Activated CD8-positive, alpha-beta T cell treated with anti-CD3 and anti-CD28 coated beads for 36 hours (primary cell): ENCODE measurements at regions of chr16 and their contacts with region 1.

Region 1: GRCh38 chr16:26645614-26646013 is 421.1 kb upstream of the C16orf82 start:
- DNase-seq: peak; percentile 73
- ATAC-seq: peak; percentile 81
- H3K4me3 Mint-ChIP-seq: no peak overlapping the region
- H3K27ac Mint-ChIP-seq: no peak overlapping the region
- H3K4me1 Mint-ChIP-seq: peaks cover 19% of the 10 kb centered on the region
- H3K27me3 Mint-ChIP-seq: peaks cover 6% of the 10 kb centered on the region
- CTCF ChIP-seq: peak; percentile 84

Region 2: GRCh38 chr16:26569793-26570192 is 75.8 kb before region 1 on chr16:
- CTCF ChIA-PET with region 1: interaction called, 12 read pairs
- POLR2A ChIA-PET with region 1: no interaction called
- intact Hi-C with region 1: no loop called
- DNase-seq: peak; percentile 15
- ATAC-seq: peak; percentile 53
- H3K4me3 Mint-ChIP-seq: no peak overlapping the region
- H3K27ac Mint-ChIP-seq: no peak overlapping the region
- H3K4me1 Mint-ChIP-seq: no peaks in the 10 kb centered on the region
- H3K27me3 Mint-ChIP-seq: peaks cover 13% of the 10 kb centered on the region
- CTCF ChIP-seq: no peak

Region 3: DNA sequence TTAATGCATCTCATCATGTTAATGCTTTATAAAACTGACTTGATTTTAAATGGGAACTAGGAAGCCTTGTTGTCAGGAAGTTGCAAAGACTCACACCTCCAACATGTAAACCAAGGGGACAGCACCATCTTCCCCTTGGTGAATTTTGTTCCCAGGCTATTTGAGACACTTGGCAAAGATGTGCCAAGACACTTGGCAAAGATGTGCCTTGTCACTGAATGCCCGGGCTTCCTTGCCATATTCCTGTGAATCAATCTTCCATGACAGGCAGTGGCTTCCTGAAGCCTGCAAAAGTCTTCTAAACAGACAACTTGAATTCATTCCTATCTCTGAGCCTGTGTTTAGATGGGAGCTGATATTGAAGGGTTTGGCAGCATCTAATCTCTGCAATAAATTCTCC is 44.3 kb before region 1 on chr16:
- CTCF ChIA-PET with region 1: interaction called, 12 read pairs
- POLR2A ChIA-PET with region 1: no interaction called
- intact Hi-C with region 1: no loop called
- DNase-seq: no peak
- ATAC-seq: no peak
- H3K4me3 Mint-ChIP-seq: no peak overlapping the region
- H3K27ac Mint-ChIP-seq: peak overlapping the region; percentile 1
- H3K4me1 Mint-ChIP-seq: peaks cover 49% of the 10 kb centered on the region
- H3K27me3 Mint-ChIP-seq: peaks cover 11% of the 10 kb centered on the region
- CTCF ChIP-seq: no peak

Region 4: DNA sequence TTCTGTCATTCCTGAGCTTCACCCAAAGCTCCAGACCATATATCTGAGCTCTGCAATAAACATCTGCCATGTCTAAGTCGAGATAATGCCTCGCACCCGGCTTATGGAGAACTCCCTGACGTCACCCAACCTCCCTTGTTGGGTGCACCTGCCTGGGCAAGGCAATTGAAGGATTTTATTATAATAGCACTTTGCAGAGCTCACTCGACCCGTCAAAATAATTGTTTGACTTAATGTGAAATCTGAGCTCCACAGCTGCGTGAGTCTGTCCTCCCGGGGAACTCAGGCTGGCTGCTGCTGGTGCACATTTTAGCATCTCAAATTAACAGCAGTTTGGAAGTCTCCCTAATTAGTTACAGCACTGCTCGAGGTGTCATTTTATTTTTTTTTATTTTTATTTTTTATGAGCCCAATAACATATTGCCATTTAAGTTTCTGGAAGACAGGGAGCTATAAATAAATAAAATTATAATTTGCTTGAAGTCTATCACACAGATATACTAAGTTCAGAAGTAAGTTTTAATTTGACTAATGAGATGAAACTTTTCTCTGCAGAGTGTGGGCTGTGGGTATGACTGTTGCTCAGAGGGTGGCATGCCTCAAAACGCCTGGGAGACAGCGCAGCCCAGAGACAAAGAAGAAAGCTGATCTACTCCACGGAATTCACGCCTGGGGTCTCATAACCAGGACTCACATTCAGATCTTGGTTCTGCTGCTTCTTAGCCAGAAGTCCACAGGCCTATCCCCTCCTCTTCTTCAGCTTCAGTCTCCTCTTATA is 19.7 kb after region 1 on chr16:
- CTCF ChIA-PET with region 1: interaction called, 12 read pairs
- POLR2A ChIA-PET with region 1: no interaction called
- intact Hi-C with region 1: no loop called
- DNase-seq: peak; percentile 56
- ATAC-seq: peak; percentile 83
- H3K4me3 Mint-ChIP-seq: no peak overlapping the region
- H3K27ac Mint-ChIP-seq: no peak overlapping the region
- H3K4me1 Mint-ChIP-seq: peaks cover 31% of the 10 kb centered on the region
- H3K27me3 Mint-ChIP-seq: peaks cover 15% of the 10 kb centered on the region
- CTCF ChIP-seq: no peak